SK-N-SH (cell line): ENCODE measurements at regions of chr5 and their contacts with region 1.

Region 1: GRCh38 chr5:137778772-137779564 is 24.8 kb upstream of the HNRNPA0 start:
- DNase-seq: peak; percentile 35
- H3K4me3 ChIP-seq: no peak overlapping the region; a peak in 1 of 4 replicates
- H3K27ac ChIP-seq: no peak overlapping the region
- H3K4me1 ChIP-seq: no peaks in the 10 kb centered on the region
- H3K27me3 ChIP-seq: no peaks in the 10 kb centered on the region
- CTCF ChIP-seq: peak; percentile 83
- EP300 ChIP-seq: no peak
- RAD21 ChIP-seq: peak; percentile 81

Region 2: GRCh38 chr5:137181667-137182066 is 597.3 kb before region 1 on chr5:
- CTCF ChIA-PET with region 1: no interaction called
- POLR2A ChIA-PET with region 1: no interaction called
- DNase-seq: peak; percentile 76
- H3K4me3 ChIP-seq: no peak overlapping the region
- H3K27ac ChIP-seq: peak overlapping the region in 1 of 2 experiments; percentile 69; a peak in 2 of 4 replicates
- H3K4me1 ChIP-seq: peaks cover 0 to 56% of the 10 kb centered on the region in 2 experiments; a peak in 3 of 4 replicates
- H3K27me3 ChIP-seq: no peaks in the 10 kb centered on the region
- CTCF ChIP-seq: no peak
- EP300 ChIP-seq: peak in 1 of 2 experiments; percentile 99; a peak in 2 of 4 replicates
- RAD21 ChIP-seq: peak; percentile 27; the same call in 1 of the 2 replicates

Region 3: DNA sequence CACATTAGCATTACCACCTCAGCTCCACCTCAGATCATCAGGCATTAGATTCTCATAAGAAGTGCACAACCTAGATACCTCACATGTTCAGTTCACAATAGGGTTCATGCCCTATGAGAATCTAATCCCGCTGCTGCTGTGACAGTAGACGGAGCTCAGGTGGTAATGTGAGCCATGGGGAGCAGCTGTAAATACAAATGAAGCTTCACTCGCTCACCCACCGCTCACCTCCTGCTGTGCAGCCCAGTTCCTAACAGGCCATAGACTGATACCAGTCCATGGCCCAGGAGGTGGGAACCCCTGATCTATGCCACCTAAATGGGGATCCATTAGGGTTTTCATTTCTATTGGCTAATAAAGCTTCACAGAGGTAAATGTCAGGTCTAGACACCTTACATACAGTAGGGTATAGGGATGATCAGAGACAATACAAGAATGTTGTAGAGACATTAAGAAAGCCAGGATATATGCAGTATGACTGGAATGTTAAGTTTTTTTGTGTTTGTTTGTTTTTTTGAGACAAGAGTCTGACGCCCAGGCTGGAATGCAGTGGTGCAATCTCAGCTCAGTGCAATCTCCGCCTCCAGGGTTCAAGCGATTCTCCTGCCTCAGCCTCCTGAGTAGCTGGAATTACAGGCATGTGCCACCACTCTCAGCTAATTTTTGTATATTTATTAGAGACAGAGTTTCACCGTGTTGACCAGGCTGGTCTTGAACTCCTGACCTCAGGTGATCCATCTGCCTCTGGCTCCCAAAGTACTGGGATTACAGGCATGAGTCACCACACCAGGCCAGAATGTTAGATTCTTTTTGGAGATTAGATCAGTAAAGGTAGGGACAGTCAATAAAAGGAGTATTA is 18.4 kb before region 1 on chr5:
- CTCF ChIA-PET with region 1: interaction called, 51 read pairs
- POLR2A ChIA-PET with region 1: no interaction called
- DNase-seq: no peak
- H3K4me3 ChIP-seq: no peak overlapping the region
- H3K27ac ChIP-seq: no peak overlapping the region
- H3K4me1 ChIP-seq: no peaks in the 10 kb centered on the region
- H3K27me3 ChIP-seq: no peaks in the 10 kb centered on the region
- CTCF ChIP-seq: no peak
- EP300 ChIP-seq: no peak
- RAD21 ChIP-seq: no peak

Region 4: GRCh38 chr5:137808503-137809205 is 29.7 kb after region 1 on chr5:
- CTCF ChIA-PET with region 1: interaction called, 21 read pairs
- POLR2A ChIA-PET with region 1: no interaction called
- DNase-seq: no peak
- H3K4me3 ChIP-seq: no peak overlapping the region
- H3K27ac ChIP-seq: no peak overlapping the region
- H3K4me1 ChIP-seq: no peaks in the 10 kb centered on the region
- H3K27me3 ChIP-seq: no peaks in the 10 kb centered on the region
- CTCF ChIP-seq: no peak
- EP300 ChIP-seq: no peak
- RAD21 ChIP-seq: no peak

Region 5: DNA sequence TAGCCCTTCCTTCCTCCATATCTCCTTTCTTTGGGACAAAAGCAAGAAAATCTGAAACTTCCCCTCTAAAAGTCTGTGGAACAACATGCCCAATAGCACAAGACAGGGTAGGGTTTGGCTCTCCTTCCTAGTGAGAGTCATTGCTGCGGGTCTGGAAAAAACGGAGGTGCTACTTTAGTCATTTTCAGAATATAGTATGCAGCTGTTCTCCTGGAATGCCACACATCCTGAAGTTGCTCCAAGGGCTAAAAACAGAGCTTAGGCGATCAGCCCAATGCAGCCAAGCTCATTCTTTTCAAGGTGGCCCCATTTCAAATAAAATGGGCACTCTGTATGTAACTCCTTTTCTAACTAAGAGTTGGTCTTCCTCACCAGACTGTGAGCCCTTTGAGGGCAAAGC is 49.2 kb after region 1 on chr5:
- CTCF ChIA-PET with region 1: interaction called, 33 read pairs
- POLR2A ChIA-PET with region 1: no interaction called
- DNase-seq: no peak
- H3K4me3 ChIP-seq: no peak overlapping the region
- H3K27ac ChIP-seq: no peak overlapping the region
- H3K4me1 ChIP-seq: no peaks in the 10 kb centered on the region; a peak in 1 of 4 replicates
- H3K27me3 ChIP-seq: no peaks in the 10 kb centered on the region
- CTCF ChIP-seq: no peak
- EP300 ChIP-seq: no peak
- RAD21 ChIP-seq: no peak

Region 6: GRCh38 chr5:137896560-137896959 is 117.6 kb after region 1 on chr5:
- CTCF ChIA-PET with region 1: interaction called, 15 read pairs
- POLR2A ChIA-PET with region 1: no interaction called
- DNase-seq: no peak
- H3K4me3 ChIP-seq: no peak overlapping the region
- H3K27ac ChIP-seq: no peak overlapping the region
- H3K4me1 ChIP-seq: no peaks in the 10 kb centered on the region
- H3K27me3 ChIP-seq: no peaks in the 10 kb centered on the region
- CTCF ChIP-seq: no peak
- EP300 ChIP-seq: no peak
- RAD21 ChIP-seq: no peak

Region 7: DNA sequence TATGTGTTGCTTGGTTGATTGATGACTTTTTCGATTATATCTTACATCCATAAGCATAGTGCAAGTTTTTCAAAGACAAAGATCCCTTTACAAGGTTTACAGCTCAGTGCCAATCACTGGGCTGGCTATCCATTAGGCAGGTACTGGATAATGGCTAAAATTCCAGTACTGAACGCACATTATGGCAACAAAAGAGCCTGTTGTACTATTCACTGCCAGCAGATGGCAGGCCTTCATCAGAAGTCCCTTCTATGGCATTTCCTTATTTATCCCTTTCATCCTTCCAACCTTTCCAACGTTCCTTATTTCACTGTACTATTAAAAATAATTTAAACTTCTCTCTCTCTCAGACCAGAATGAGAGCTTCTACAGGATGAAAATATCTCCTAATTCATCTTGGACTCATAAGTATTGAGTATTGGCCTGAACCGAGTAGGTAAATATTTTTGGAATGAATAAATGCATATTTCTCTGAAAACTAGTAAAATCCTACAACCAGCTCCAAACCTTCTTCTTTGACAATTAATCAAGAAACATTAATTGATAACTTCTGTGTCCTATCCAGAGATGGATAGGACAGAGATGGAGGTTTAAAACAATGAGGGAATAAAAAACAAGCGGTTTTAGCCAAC is 298.2 kb after region 1 on chr5:
- CTCF ChIA-PET with region 1: interaction called, 17 read pairs
- POLR2A ChIA-PET with region 1: no interaction called
- DNase-seq: peak; percentile 76
- H3K4me3 ChIP-seq: no peak overlapping the region; a peak in 1 of 4 replicates
- H3K27ac ChIP-seq: no peak overlapping the region
- H3K4me1 ChIP-seq: no peaks in the 10 kb centered on the region
- H3K27me3 ChIP-seq: no peaks in the 10 kb centered on the region; the same call in 1 of the 2 replicates
- CTCF ChIP-seq: peak; percentile 90
- EP300 ChIP-seq: no peak
- RAD21 ChIP-seq: peak; percentile 90